A549 (cell line): ENCODE measurements at regions of chr12 and their contacts with region 1.

Region 1: DNA sequence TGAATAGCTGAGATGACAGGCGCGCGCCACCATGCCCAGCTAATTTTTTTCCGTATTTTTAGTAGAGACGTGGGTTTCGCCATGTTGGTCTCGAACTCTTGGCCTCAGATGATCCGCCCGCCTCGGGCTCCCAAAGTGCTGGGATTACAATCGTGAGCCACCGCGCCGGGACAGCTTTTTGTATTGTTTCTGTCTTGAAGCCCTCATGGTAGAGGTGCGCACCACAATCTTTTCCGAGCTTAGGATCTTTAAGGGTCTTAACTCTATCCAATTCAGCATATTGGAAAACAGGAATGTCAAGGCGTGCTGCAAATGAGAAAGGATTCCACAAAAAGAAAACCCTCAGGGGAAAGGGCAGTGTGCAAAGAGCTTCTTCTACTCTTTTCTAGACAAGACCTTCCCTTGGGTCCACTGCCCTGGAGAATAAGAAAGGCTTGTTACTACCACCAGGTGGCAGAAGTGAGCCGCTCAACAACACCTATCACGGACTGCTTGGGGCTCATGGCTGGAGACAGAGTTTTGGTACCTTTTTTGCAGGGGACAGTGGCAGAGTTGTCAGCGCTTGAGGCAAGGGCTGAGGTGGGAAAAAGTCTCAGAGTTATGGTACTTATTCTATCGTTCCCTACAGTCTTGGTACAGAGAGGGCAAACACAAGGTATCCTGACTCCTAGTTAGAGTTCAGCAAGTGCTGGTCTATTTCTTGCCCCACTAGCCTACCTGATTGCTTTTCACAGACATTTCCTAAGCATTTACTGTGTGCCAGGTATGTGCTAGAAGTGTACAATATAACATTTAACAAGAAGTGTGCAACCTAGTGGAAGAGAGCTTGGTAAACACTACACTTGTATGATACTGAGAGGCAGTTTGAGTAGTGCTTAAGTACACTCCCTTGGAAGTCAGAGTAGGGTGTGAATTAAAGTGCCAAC is 16.4 kb upstream of the SP7 start:
- DNase-seq: peak; percentile 66 to 93
- ATAC-seq: peak; percentile 99 to 100
- H3K4me3 ChIP-seq: no peak overlapping the region
- H3K27ac ChIP-seq: peak overlapping the region; percentile 29 to 63
- H3K4me1 ChIP-seq: peaks cover 6% of the 10 kb centered on the region
- CTCF ChIP-seq: peak; percentile 94
- EP300 ChIP-seq: no peak
- POLR2A ChIP-seq: no peak
- RAD21 ChIP-seq: peak; percentile 97 to 99

Region 2: GRCh38 chr12:53251477-53252348 is 100.9 kb before region 1 on chr12:
- CTCF ChIA-PET with region 1: no interaction called
- POLR2A ChIA-PET with region 1: no interaction called
- DNase-seq: peak; percentile 83 to 87
- ATAC-seq: peak; percentile 90 to 92
- H3K4me3 ChIP-seq: peak overlapping the region; percentile 90
- H3K27ac ChIP-seq: peak overlapping the region; percentile 91 to 94
- H3K4me1 ChIP-seq: peaks cover 16% of the 10 kb centered on the region
- CTCF ChIP-seq: peak; percentile 47
- EP300 ChIP-seq: no peak
- POLR2A ChIP-seq: peak; percentile 92
- RAD21 ChIP-seq: peak; percentile 64 to 69

Region 3: DNA sequence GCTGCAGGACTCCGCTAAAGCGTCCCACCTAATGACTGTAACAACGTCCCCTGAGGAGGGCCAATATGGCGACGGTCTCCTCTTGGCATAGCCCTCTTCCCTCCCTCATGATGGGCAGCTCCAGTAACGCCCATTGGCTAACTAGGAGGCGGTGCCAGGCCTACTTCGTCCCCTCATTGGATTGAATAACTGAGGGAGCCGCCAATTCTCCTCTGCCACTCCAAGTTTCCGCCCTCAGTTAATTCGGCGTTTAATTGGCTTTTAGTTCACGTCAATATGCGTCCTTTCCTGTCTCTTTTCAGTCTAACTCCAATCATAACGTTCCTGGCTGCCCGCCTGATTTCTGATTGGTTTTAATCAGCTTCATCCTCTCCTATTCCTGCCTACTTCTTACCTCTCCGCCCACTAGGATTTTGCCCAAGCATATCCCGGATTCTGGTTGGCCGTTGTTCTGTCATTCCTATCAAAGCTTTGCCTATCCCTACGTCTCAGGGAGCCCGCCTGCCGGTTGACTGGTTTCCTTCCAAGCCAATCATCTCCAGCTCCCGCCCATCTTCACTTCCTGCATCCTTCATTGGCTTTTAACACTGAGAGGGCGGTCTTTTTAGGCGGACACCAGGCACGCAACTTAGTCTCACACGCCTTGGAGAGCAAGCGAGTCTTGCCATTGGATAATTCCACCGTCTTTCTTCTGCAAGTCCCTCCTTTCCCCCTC is 27.0 kb after region 1 on chr12:
- CTCF ChIA-PET with region 1: interaction called, 199 read pairs
- POLR2A ChIA-PET with region 1: interaction called, 12 read pairs
- DNase-seq: peak; percentile 97 to 100
- ATAC-seq: peak; percentile 87 to 92
- H3K4me3 ChIP-seq: peak overlapping the region; percentile 70
- H3K27ac ChIP-seq: peak overlapping the region; percentile 95 to 99
- H3K4me1 ChIP-seq: peaks cover 32% of the 10 kb centered on the region
- CTCF ChIP-seq: no peak
- EP300 ChIP-seq: no peak
- POLR2A ChIP-seq: peak; percentile 82
- RAD21 ChIP-seq: no peak

Region 4: DNA sequence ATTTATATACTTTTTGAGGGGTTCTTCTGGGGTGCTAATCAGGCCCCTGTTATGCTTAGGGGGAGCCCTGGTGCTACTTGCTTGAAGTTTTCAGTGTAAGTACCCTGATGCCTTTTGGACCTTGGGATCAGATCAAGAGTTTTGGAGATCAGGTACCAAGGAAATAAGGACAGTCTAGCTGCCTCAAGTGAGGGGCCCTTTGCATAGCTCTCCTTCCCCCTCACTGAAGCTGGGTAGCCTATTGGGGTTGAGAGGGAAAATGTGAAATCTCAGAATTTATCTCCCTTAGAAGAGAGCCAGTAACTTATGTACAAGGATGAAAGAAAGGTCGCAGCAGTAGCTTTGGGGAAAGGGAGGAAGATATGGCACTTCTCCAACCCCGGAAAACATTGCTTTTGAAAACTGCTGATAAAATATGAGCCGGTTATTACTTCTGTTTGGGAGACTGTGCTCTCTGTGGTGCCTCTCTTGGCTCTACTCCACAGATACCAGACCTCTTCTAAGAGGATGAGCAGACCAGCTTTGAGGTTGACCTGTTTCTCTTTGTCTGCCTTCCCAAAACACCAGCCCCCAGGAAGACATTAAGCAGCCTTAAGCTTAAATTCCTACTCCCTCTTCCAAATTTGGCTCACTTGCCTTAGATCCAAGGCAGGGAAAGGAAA is 62.3 kb after region 1 on chr12:
- CTCF ChIA-PET with region 1: interaction called, 408 read pairs
- POLR2A ChIA-PET with region 1: no interaction called
- DNase-seq: no peak
- ATAC-seq: no peak; a peak in 1 of 6 replicates
- H3K4me3 ChIP-seq: no peak overlapping the region
- H3K27ac ChIP-seq: no peak overlapping the region
- H3K4me1 ChIP-seq: peaks cover 45% of the 10 kb centered on the region
- CTCF ChIP-seq: no peak
- EP300 ChIP-seq: no peak
- POLR2A ChIP-seq: no peak
- RAD21 ChIP-seq: no peak

Region 5: DNA sequence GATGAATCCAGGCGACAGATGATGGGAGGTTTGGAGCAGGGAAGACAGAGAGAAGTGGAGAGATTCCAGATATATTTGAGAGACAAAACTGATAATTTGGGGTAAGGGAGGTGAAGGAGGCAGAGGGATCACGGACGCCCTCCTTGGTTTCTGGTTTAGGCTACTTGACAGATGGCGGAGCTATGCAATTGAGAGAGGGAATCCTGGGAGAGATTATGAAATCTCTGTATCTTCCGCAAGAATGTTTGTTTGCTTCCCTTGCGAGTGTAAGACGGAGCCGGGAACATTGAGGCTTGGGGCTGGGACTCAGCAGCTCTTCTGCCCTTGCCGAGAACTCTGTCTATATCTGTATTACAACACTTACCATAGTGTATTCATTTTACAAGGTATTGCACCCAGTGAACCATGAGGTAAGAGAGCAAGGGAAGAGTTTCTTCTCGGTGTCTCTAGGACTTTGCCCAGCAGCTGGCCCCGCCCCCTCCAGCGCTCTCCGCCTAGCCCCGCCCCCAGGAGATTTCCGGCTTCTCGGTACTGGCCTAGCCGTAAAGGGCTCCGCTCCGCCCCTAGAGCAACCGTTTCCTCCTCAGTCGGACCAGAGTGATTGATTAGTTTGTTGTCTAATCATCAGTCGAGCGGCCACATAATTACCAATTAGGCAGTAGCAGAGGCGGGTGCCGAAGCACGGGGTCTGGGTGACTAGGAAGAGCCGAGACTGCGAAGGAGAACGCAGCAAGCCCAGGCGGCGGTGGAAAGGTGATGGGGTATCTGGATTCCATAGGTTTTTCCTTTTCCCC is 88.6 kb after region 1 on chr12 and contains the start of gene PRR13:
- CTCF ChIA-PET with region 1: interaction called, 10 read pairs
- POLR2A ChIA-PET with region 1: interaction called, 5 read pairs
- DNase-seq: peak; percentile 99 to 100
- ATAC-seq: peak; percentile 96
- H3K4me3 ChIP-seq: peak within 1 kb of the TSS; percentile 71
- H3K27ac ChIP-seq: peak within 1 kb of the TSS; percentile 91 to 93
- H3K4me1 ChIP-seq: peaks cover 26% of the 10 kb centered on the region
- CTCF ChIP-seq: 0 out of 3 replicates have a peak, but pooled peaks have one; percentile 8
- EP300 ChIP-seq: no peak
- POLR2A ChIP-seq: peak; percentile 95
- RAD21 ChIP-seq: no peak
- polyA plus RNA-seq, gene PRR13: 203 and 257 TPM in 2 replicates

Region 6: GRCh38 chr12:53481957-53482586 is 129.5 kb after region 1 on chr12:
- CTCF ChIA-PET with region 1: interaction called, 46 read pairs
- POLR2A ChIA-PET with region 1: interaction called, 3 read pairs
- DNase-seq: peak; percentile 62 to 63
- ATAC-seq: peak; percentile 30 to 45
- H3K4me3 ChIP-seq: no peak overlapping the region
- H3K27ac ChIP-seq: no peak overlapping the region
- H3K4me1 ChIP-seq: peaks cover 36% of the 10 kb centered on the region
- CTCF ChIP-seq: 0 out of 3 replicates have a peak, but pooled peaks have one; percentile 4
- EP300 ChIP-seq: no peak
- POLR2A ChIP-seq: no peak
- RAD21 ChIP-seq: no peak